Activated CD4-positive, alpha-beta memory T cell treated with anti-CD3 and anti-CD28 coated beads for 36 hours (primary cell): ENCODE measurements at regions of chr2 and their contacts with region 1.

Region 1: DNA sequence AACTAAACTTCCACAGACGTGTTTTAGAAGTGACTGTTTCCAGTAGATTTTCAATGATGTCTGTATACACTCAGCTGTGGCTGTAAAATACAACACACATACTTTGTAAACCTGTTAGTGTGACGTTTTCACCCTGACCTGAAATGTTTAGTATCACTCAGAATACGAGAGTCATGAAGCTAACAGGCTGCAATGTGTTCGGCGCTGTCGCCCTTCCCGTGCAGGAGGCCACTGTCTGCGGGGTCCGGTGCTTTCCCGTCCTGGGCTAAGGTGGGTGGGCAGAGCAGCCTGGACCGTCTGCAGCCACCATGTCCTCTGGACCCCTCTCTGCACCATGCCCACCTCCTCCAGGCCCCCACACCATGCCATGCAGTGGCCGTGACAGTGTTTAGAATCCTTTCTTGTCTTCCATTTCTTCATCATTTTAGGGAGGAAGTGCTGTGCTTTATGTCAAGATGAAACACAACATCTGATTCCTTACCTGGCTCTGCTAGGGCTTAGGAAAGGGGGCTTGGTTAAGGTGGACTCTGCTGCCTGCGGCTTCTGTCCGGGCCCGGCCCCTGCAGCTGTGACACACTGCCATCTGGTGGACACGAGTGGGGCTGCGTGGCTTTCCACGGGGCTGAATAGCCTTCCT is 53.8 kb upstream of the RBM44 start:
- DNase-seq: peak; percentile 86
- H3K4me3 Mint-ChIP-seq: no peak overlapping the region
- H3K27ac Mint-ChIP-seq: peak overlapping the region; percentile 76
- H3K4me1 Mint-ChIP-seq: peaks cover 39% of the 10 kb centered on the region
- H3K27me3 Mint-ChIP-seq: no peaks in the 10 kb centered on the region

Region 2: GRCh38 chr2:237581751-237582746 is 162.7 kb before region 1 on chr2:
- CTCF ChIA-PET with region 1: interaction called, 54 read pairs
- POLR2A ChIA-PET with region 1: no interaction called
- intact Hi-C with region 1: loop called (anchors 1 kb)
- DNase-seq: peak; percentile 80
- H3K4me3 Mint-ChIP-seq: no peak overlapping the region
- H3K27ac Mint-ChIP-seq: no peak overlapping the region
- H3K4me1 Mint-ChIP-seq: peaks cover 5% of the 10 kb centered on the region
- H3K27me3 Mint-ChIP-seq: no peaks in the 10 kb centered on the region

Region 3: DNA sequence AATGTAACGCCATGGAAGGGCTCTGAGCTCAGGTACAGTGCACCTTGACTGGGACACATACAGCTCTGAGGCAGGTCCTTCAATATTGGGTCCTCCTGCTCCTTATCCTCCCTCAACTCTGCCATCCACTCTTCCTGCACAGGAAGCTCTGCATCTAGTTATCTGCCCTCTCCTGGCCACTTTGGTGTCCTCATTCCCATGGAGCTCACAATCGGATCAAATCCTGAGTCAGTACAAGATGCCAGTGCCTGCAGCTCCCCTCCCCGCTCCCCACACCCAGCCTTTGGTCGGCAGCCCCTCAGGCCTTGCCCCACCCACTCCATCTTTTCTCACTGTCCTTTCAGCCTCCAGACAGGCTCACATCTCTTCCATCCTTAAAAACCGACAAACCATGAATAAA is 59.3 kb before region 1 on chr2:
- CTCF ChIA-PET with region 1: interaction called, 28 read pairs
- POLR2A ChIA-PET with region 1: no interaction called
- intact Hi-C with region 1: no loop called
- DNase-seq: peak; percentile 7
- H3K4me3 Mint-ChIP-seq: no peak overlapping the region
- H3K27ac Mint-ChIP-seq: no peak overlapping the region
- H3K4me1 Mint-ChIP-seq: peaks cover 41% of the 10 kb centered on the region
- H3K27me3 Mint-ChIP-seq: no peaks in the 10 kb centered on the region

Region 4: DNA sequence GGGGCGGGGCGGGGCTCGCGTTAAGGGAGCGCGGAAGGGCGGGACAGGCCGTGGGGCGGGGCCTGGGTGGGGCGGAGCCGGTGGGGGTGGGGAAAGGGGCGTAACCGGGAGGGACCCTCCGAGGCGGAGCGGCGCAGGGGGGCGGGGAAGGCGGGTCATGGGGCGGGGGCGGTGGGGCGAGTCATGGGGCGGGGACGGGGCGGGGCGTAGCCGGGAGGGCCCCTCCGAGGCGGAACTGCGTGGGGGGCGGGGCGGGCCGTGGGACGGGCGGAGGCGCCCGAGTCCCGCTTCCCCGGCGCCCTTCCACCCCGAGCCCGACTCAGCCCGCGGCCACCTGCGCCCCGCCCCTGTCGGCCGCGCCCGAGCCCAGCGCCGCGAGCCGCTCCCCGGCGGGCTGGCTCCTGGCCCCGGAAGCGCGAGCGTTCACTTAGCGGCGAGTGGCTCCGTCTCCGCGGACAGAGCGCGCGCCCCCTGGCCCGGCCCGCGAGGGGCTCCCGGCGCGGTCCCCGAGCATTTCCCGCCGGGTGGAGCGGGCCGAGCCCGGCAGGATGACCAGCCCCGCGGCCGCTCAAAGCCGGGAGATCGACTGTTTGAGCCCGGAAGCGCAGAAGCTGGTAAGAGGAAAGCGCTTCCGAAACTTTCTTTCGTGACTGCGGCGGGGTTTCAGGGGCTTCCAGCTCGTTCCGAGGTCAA is 52.7 kb before region 1 on chr2:
- CTCF ChIA-PET with region 1: interaction called, 28 read pairs
- POLR2A ChIA-PET with region 1: interaction called, 3 read pairs
- intact Hi-C with region 1: loop called (anchors 2 kb)
- DNase-seq: peak; percentile 96
- H3K4me3 Mint-ChIP-seq: peak overlapping the region; percentile 98
- H3K27ac Mint-ChIP-seq: peak overlapping the region; percentile 99
- H3K4me1 Mint-ChIP-seq: peaks cover 62% of the 10 kb centered on the region
- H3K27me3 Mint-ChIP-seq: no peaks in the 10 kb centered on the region

Region 5: DNA sequence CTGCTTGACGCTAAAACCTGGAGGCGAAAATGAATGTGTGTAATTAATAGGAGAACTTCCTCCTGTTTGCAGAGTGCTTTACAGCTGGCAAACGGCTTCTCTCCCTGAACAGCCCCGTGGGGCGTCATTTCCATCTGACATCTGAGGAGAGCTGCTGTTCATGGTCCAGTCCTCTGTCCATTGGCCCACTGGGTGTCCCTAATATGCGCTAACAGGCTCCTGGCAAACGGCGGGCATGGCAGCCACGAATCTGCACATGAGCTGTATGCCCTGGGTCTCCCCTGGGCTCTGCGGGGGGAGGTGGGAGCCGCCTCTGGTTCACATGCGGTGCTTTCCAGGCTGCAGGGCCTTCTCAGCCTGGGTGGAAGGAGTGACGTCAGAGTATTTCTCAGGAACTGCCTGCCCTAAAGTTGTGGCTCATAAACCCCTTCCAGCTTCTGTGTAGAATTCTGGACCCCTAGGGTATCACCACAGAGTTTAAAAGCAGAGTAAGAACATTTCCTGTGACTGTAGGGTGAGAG is 44.2 kb before region 1 on chr2:
- CTCF ChIA-PET with region 1: interaction called, 25 read pairs
- POLR2A ChIA-PET with region 1: interaction called, 3 read pairs
- intact Hi-C with region 1: loop called (anchors 2 kb)
- DNase-seq: peak; percentile 90
- H3K4me3 Mint-ChIP-seq: peak overlapping the region; percentile 54
- H3K27ac Mint-ChIP-seq: peak overlapping the region; percentile 98
- H3K4me1 Mint-ChIP-seq: peaks cover 94% of the 10 kb centered on the region
- H3K27me3 Mint-ChIP-seq: no peaks in the 10 kb centered on the region

Region 6: GRCh38 chr2:237731663-237732062 is 13.1 kb before region 1 on chr2:
- CTCF ChIA-PET with region 1: interaction called, 26 read pairs
- POLR2A ChIA-PET with region 1: interaction called, 4 read pairs
- intact Hi-C with region 1: no loop called
- DNase-seq: peak; percentile 81
- H3K4me3 Mint-ChIP-seq: peak overlapping the region; percentile 11
- H3K27ac Mint-ChIP-seq: peak overlapping the region; percentile 81
- H3K4me1 Mint-ChIP-seq: peaks cover 77% of the 10 kb centered on the region
- H3K27me3 Mint-ChIP-seq: no peaks in the 10 kb centered on the region

Region 7: GRCh38 chr2:237774802-237775553 is 30.2 kb after region 1 on chr2:
- CTCF ChIA-PET with region 1: interaction called, 11 read pairs
- POLR2A ChIA-PET with region 1: no interaction called
- intact Hi-C with region 1: no loop called
- DNase-seq: peak; percentile 62
- H3K4me3 Mint-ChIP-seq: no peak overlapping the region
- H3K27ac Mint-ChIP-seq: no peak overlapping the region
- H3K4me1 Mint-ChIP-seq: no peaks in the 10 kb centered on the region
- H3K27me3 Mint-ChIP-seq: no peaks in the 10 kb centered on the region